Mammary epithelial cell (primary cell): ENCODE measurements at regions of chr1 and their contacts with region 1.

Region 1: DNA sequence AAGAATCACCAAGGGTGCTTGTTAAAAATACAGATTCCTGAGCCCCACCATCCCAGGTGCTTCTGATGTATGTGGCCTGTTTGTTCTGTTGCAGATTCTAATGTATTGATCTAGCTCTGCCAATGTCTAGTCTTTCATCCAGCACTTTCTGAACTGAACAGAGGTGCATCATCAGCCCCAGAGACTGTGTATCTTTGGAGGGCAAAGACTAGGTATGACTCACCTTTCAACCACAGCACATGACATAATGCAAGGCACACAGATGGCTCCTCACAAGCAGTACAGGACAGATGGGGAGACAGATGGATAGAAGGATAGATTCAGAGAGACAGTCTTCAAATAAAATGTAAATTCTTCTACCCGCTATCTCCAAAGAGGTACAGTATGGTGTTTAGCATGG is 32.3 kb downstream of the CD58 start:
- DNase-seq: peak; percentile 86
- H3K4me3 ChIP-seq: no peak overlapping the region
- H3K27ac ChIP-seq: peak overlapping the region; percentile 69
- H3K4me1 ChIP-seq: peaks cover 51% of the 10 kb centered on the region
- H3K27me3 ChIP-seq: no peaks in the 10 kb centered on the region
- CTCF ChIP-seq: no peak

Region 2: GRCh38 chr1:116504308-116505156 is 34.0 kb before region 1 on chr1:
- CTCF ChIA-PET with region 1: interaction called, 3 read pairs
- dilution Hi-C with region 1: no loop called
- in situ Hi-C with region 1: no loop called
- intact Hi-C with region 1: loop called (anchors 1 kb)
- DNase-seq: peak; percentile 60
- H3K4me3 ChIP-seq: no peak overlapping the region
- H3K27ac ChIP-seq: peak overlapping the region; percentile 2
- H3K4me1 ChIP-seq: peaks cover 40% of the 10 kb centered on the region
- H3K27me3 ChIP-seq: no peaks in the 10 kb centered on the region
- CTCF ChIP-seq: no peak

Region 3: DNA sequence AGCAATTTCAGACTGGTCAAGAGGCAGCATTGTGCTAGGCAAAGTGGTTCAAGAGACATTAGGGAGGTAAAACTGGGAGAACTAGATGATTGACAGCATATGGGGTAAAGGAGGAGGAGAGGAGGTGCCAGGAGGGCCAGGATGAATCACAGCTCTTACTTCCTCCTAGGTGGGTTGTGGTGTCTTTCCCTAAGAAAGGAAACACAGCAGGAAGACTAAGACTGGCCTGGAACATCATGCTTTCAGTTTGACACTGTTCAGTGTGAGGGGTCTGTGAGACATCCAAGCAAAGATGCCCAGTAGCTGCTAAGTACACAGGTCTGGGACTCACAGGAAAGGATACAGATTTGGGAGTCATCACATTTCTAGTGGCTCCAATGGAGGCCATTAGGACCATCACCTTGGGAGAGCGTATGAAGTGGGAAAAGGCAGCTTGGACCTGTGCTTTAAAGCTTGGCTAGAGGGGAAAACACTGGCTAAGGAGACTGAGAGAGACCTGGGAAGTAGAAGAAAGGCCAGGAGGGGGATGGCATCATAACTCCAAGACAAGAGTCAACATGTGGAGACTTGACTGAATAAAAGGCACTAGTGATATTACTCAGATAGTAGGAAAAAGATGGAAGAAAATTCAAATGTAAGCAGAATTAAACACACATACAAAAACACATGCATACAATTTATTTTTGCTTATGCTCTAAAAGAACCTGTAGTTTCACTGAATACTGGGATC is 15.0 kb after region 1 on chr1:
- CTCF ChIA-PET with region 1: no interaction called
- dilution Hi-C with region 1: no loop called
- in situ Hi-C with region 1: no loop called
- intact Hi-C with region 1: loop called (anchors 2 kb)
- DNase-seq: peak; percentile 83
- H3K4me3 ChIP-seq: peak overlapping the region in 1 of 3 experiments; percentile 14
- H3K27ac ChIP-seq: peak overlapping the region; percentile 85
- H3K4me1 ChIP-seq: peaks cover 45% of the 10 kb centered on the region
- H3K27me3 ChIP-seq: no peaks in the 10 kb centered on the region
- CTCF ChIP-seq: no peak